ENCODE measurements at regions of chr16 and their contacts with region 1.

Region 1: GRCh38 chr16:72400257-72400882 is 228.4 kb upstream of the PMFBP1 start:
- DNase-seq: peak; percentile 41
- ATAC-seq: peak; percentile 53
- H3K4me3 Mint-ChIP-seq: no peak overlapping the region
- H3K27ac Mint-ChIP-seq: no peak overlapping the region
- H3K4me1 Mint-ChIP-seq: no peaks in the 10 kb centered on the region
- H3K27me3 Mint-ChIP-seq: no peaks in the 10 kb centered on the region

Region 2: GRCh38 chr16:72542102-72542501 is 141.7 kb after region 1 on chr16:
- CTCF ChIA-PET with region 1: no interaction called
- POLR2A ChIA-PET with region 1: no interaction called
- intact Hi-C with region 1: no loop called
- DNase-seq: no peak
- ATAC-seq: no peak
- H3K4me3 Mint-ChIP-seq: no peak overlapping the region
- H3K27ac Mint-ChIP-seq: no peak overlapping the region
- H3K4me1 Mint-ChIP-seq: no peaks in the 10 kb centered on the region
- H3K27me3 Mint-ChIP-seq: no peaks in the 10 kb centered on the region

Region 3: GRCh38 chr16:72847187-72848027 is 447.0 kb after region 1 on chr16:
- CTCF ChIA-PET with region 1: no interaction called
- POLR2A ChIA-PET with region 1: no interaction called
- intact Hi-C with region 1: loop called in 1 of 2 experiments (anchors 10 kb)
- DNase-seq: peak; percentile 39
- ATAC-seq: no peak
- H3K4me3 Mint-ChIP-seq: no peak overlapping the region
- H3K27ac Mint-ChIP-seq: no peak overlapping the region
- H3K4me1 Mint-ChIP-seq: peaks cover 8% of the 10 kb centered on the region
- H3K27me3 Mint-ChIP-seq: no peaks in the 10 kb centered on the region

Measured in activated CD4-positive, alpha-beta T cell treated with anti-CD3 and anti-CD28 coated beads for 36 hours (primary cell).